Ovary (tissue), 10 donors: ENCODE measurements at regions of chr11 and their contacts with region 1.

Region 1: DNA sequence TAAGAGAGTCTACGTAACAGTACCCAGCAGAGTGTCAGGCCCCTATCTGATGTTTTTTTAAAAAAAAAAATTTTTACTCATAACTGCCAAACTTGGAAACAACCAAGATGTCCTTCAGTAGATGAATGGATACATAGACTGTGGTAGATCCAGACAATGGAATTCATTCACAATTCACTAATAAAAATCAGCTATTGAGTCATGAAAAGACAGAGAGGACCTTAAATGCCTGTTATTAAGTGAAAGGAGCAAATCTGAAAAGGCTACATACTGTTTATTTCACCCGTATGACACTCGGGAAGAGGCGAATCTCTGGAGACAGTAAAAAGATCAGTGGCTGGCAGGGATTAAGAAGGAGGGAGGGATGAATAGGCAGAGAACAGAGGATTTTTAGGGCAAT is 541.4 kb upstream of the TENM4 start:
- DNase-seq: no peak
- H3K4me3 ChIP-seq: no peak overlapping the region
- H3K27ac ChIP-seq: no peak overlapping the region
- H3K4me1 ChIP-seq: no peaks in the 10 kb centered on the region
- H3K27me3 ChIP-seq: no peaks in the 10 kb centered on the region
- CTCF ChIP-seq: no peak
- EP300 ChIP-seq: no peak
- POLR2A ChIP-seq: no peak

Region 2: GRCh38 chr11:79809487-79809886 is 172.7 kb before region 1 on chr11:
- intact Hi-C with region 1: no loop called
- DNase-seq: no peak
- H3K4me3 ChIP-seq: no peak overlapping the region
- H3K27ac ChIP-seq: no peak overlapping the region
- H3K4me1 ChIP-seq: no peaks in the 10 kb centered on the region
- H3K27me3 ChIP-seq: no peaks in the 10 kb centered on the region
- CTCF ChIP-seq: no peak
- EP300 ChIP-seq: no peak
- POLR2A ChIP-seq: no peak

Region 3: DNA sequence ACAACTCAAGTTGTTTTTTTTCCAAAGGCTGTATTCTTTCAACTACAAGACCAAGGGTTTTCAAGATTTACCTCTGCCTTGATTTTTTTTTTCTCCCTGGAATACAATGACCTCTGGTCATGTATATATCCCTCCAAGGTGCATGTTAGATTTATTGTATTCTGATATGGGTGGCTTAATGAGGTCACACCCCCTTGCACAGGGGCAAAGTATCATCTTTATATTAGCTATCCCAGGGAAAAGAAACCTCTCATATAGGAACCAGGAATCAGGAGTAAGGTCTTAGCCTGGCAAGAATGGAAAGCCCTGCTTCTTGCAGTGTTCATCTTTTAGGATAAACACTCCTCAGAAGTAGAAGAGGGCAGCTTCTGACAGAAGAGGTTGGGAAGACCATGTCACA is 24.5 kb before region 1 on chr11:
- intact Hi-C with region 1: loop called in 1 of 4 experiments (anchors 1 kb)
- DNase-seq: no peak
- H3K4me3 ChIP-seq: no peak overlapping the region
- H3K27ac ChIP-seq: no peak overlapping the region
- H3K4me1 ChIP-seq: no peaks in the 10 kb centered on the region
- H3K27me3 ChIP-seq: no peaks in the 10 kb centered on the region
- CTCF ChIP-seq: no peak
- EP300 ChIP-seq: no peak
- POLR2A ChIP-seq: no peak

Region 4: GRCh38 chr11:80129389-80129788 is 147.2 kb after region 1 on chr11:
- intact Hi-C with region 1: loop called in 1 of 4 experiments (anchors 5 kb)
- DNase-seq: no peak
- H3K4me3 ChIP-seq: no peak overlapping the region
- H3K27ac ChIP-seq: no peak overlapping the region
- H3K4me1 ChIP-seq: no peaks in the 10 kb centered on the region
- H3K27me3 ChIP-seq: no peaks in the 10 kb centered on the region
- CTCF ChIP-seq: no peak
- EP300 ChIP-seq: no peak
- POLR2A ChIP-seq: no peak